ENCODE measurements at regions of chr17 and their contacts with region 1.

Region 1: GRCh38 chr17:36545465-36546417 is 1.0 kb downstream of the GGNBP2 start:
- DNase-seq: peak; percentile 96
- H3K4me3 Mint-ChIP-seq: peak overlapping the region; percentile 96
- H3K27ac Mint-ChIP-seq: peak overlapping the region; percentile 95
- H3K4me1 Mint-ChIP-seq: peaks cover 19% of the 10 kb centered on the region
- H3K27me3 Mint-ChIP-seq: no peaks in the 10 kb centered on the region
- CTCF ChIP-seq: no peak

Region 2: DNA sequence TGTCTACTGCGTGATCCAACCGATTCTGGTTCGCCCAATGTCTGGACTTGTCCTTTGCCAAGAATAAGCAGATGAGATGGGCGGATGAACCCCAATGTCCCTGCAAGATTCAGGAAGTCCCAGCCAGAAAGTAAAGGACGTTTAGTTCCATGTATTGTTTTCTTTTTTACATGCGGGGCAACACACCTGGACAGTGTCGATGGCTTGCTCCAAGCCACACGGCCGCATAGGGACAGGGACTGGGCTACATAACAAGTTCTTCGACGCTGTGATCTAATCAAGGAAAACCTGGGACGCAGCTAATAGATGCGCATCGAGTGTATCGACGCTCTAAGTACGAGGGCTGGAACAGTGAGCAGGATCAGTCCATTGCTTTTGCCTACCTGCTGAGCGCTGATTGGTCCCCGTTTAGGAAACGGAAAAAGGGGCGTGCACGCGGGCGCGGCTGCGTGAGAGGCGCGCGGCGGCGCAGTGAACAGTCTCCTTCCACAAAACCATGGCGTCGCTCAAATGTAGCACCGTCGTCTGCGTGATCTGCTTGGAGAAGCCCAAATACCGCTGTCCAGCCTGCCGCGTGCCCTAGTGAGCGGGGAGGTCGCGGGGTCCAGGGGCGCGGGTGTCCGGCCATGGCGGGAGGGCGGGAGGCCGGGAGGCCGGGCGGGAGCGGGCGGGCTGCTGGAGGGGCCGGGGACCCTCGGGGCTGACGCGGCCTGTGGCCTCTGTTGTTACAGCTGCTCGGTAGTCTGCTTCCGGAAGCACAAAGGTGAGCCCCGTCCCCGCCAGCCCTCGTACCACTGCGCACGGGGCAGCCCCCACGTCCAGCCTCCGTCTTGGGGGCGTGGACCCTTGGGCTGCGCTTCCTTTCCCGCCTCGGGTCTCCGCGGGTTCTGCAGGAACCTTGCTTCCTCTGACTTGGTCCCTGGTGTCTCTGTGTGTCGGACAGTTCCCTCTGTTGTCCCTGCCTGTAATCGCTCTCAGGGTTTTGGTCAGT is 59.2 kb before region 1 on chr17 and contains the start of gene ZNHIT3:
- CTCF ChIA-PET with region 1: interaction called, 3 read pairs
- POLR2A ChIA-PET with region 1: interaction called, 10 read pairs
- intact Hi-C with region 1: no loop called
- DNase-seq: peak; percentile 94
- H3K4me3 Mint-ChIP-seq: peak within 1 kb of the TSS; percentile 86
- H3K27ac Mint-ChIP-seq: peak within 1 kb of the TSS; percentile 92
- H3K4me1 Mint-ChIP-seq: peaks cover 6% of the 10 kb centered on the region
- H3K27me3 Mint-ChIP-seq: peaks cover 10% of the 10 kb centered on the region
- CTCF ChIP-seq: no peak
- total RNA-seq, gene ZNHIT3: 33.9 and 35.5 TPM in 2 replicates

Region 3: DNA sequence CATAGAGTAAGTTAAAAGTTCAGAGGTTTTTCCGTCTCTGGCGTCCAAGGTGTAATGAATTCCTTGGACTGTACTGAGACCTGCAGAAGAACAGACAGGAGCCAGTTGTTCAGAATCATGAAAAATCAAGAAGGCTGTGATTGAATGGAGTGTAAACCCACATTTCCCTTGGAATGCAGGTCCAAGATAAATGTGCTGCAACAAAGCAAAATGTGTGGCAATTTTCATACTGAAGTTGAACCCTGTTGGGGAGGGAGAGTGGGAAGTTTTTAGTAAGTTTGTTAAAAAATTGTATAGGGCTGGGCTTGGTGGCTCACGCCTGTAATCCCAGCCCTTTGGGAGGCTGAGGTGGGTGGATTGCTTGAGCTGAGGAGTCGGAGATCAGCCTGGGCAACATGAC is 20.3 kb after region 1 on chr17:
- CTCF ChIA-PET with region 1: interaction called, 3 read pairs
- POLR2A ChIA-PET with region 1: interaction called, 11 read pairs
- intact Hi-C with region 1: no loop called
- DNase-seq: no peak
- H3K4me3 Mint-ChIP-seq: no peak overlapping the region
- H3K27ac Mint-ChIP-seq: peak overlapping the region; percentile 59
- H3K4me1 Mint-ChIP-seq: no peaks in the 10 kb centered on the region
- H3K27me3 Mint-ChIP-seq: no peaks in the 10 kb centered on the region
- CTCF ChIP-seq: no peak

Region 4: GRCh38 chr17:36591434-36592315 is 45.9 kb after region 1 on chr17 and contains the start of gene DHRS11:
- CTCF ChIA-PET with region 1: no interaction called
- POLR2A ChIA-PET with region 1: interaction called, 25 read pairs
- intact Hi-C with region 1: loop called (anchors 2 kb)
- DNase-seq: peak; percentile 81
- H3K4me3 Mint-ChIP-seq: peak within 1 kb of the TSS; percentile 72
- H3K27ac Mint-ChIP-seq: peak within 1 kb of the TSS; percentile 42
- H3K4me1 Mint-ChIP-seq: peaks cover 18% of the 10 kb centered on the region
- H3K27me3 Mint-ChIP-seq: no peaks in the 10 kb centered on the region
- CTCF ChIP-seq: no peak
- total RNA-seq, gene DHRS11: 11.8 and 14.7 TPM in 2 replicates

Region 5: GRCh38 chr17:36686111-36686669 is 140.4 kb after region 1 on chr17:
- CTCF ChIA-PET with region 1: no interaction called
- POLR2A ChIA-PET with region 1: no interaction called
- intact Hi-C with region 1: no loop called
- DNase-seq: peak; percentile 33
- H3K4me3 Mint-ChIP-seq: no peak overlapping the region
- H3K27ac Mint-ChIP-seq: no peak overlapping the region
- H3K4me1 Mint-ChIP-seq: peaks cover 9% of the 10 kb centered on the region
- H3K27me3 Mint-ChIP-seq: peaks cover 77% of the 10 kb centered on the region
- CTCF ChIP-seq: no peak

Region 6: DNA sequence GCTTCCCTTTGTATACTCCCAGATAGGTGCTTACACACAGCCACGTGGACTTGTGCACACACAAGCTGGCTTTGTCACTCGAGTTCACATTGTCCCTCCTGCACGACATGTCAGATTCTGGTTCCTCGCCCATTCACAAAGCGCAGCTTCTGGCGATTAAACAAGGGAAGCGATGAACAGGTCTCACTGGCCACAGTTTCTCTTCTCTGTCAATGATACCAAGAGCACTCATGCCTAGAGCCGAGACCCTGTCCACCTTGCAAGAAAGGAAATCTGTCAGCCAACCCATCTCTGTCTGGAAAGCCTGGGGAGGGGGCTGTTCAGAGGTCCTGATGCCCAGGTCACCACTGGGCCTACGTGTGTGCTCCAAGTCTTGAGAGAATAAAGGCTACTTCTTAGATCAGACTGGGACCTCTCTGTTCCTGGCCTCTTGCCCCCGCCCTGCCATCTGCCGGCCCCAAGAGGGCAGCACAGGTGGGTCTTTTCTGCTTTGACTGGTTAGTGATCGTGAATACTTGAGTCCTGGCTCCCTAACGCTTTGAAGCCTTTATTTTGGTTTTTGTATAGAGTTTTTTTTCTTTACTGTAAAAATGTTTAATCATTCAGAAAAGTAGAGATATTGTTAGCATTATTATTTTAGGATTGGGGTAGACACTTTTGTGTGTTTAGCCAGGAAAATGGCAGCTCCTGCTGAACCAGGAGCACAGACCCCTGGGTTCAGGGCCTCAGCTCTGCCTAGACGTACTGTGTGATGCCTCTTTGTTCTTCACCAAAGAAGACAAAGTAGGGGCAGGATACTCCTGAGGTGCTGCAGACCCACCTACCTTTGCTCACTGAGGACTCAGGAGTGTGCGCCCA is 160.4 kb after region 1 on chr17:
- CTCF ChIA-PET with region 1: no interaction called
- POLR2A ChIA-PET with region 1: no interaction called
- intact Hi-C with region 1: no loop called
- DNase-seq: peak; percentile 58
- H3K4me3 Mint-ChIP-seq: no peak overlapping the region
- H3K27ac Mint-ChIP-seq: no peak overlapping the region
- H3K4me1 Mint-ChIP-seq: peaks cover 5% of the 10 kb centered on the region
- H3K27me3 Mint-ChIP-seq: peaks cover 50% of the 10 kb centered on the region
- CTCF ChIP-seq: peak; percentile 76